B cell (primary cell): ENCODE measurements at regions of chr17 and their contacts with region 1.

Region 1: DNA sequence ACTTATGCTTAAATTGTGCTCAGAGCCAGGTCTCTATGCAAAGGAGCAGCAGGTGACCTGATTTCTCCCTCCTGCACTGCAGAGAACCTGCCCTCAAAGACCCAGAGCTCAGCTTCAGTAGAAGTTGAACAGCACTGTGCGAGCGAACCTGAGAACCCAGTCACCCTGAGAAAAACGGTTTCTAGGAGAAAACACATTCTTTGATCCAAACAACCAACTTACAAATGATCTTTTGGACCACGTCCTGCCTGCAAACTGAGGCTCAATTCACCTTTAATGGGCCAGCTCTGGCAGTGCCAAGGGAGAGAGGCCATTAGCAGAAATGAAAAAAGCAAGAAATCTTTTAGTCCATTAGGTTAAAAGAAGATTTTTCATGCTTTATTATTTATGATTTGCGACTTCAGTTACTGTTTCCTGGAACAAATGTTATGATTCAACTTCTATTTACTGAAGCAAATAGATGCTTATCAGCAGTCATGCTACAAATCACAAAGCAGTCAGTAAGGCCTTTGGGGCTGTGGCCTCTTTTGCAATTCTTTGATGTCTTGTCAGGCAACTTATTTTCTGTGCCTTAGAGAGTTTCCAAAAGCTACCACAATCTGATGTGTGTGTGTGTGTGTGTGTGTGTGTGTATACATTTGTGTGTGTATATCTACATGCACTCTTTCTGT is 65.7 kb upstream of the LRRC37A3 start:
- DNase-seq: peak; percentile 44
- ATAC-seq: no peak
- H3K4me3 ChIP-seq: peak overlapping the region in 1 of 5 experiments; percentile 50
- H3K4me3 Mint-ChIP-seq: peak overlapping the region; percentile 81
- H3K27ac ChIP-seq: peak overlapping the region; percentile 99 to 100
- H3K27ac Mint-ChIP-seq: peak overlapping the region; percentile 99
- H3K4me1 ChIP-seq: peaks cover 33 to 49% of the 10 kb centered on the region in 2 donors
- H3K4me1 Mint-ChIP-seq: peaks cover 51% of the 10 kb centered on the region
- H3K27me3 ChIP-seq: no peaks in the 10 kb centered on the region
- H3K27me3 Mint-ChIP-seq: no peaks in the 10 kb centered on the region
- CTCF ChIP-seq: no peak

Region 2: GRCh38 chr17:64968652-64969501 is 16.1 kb before region 1 on chr17:
- CTCF ChIA-PET with region 1: interaction called, 13 read pairs
- POLR2A ChIA-PET with region 1: interaction called, 5 read pairs
- intact Hi-C with region 1: no loop called
- DNase-seq: peak; percentile 37
- ATAC-seq: no peak
- H3K4me3 ChIP-seq: no peak overlapping the region
- H3K4me3 Mint-ChIP-seq: peak overlapping the region; percentile 65
- H3K27ac ChIP-seq: peak overlapping the region; percentile 2 to 73
- H3K27ac Mint-ChIP-seq: peak overlapping the region; percentile 81
- H3K4me1 ChIP-seq: peaks cover 59 to 66% of the 10 kb centered on the region in 2 donors
- H3K4me1 Mint-ChIP-seq: peaks cover 80% of the 10 kb centered on the region
- H3K27me3 ChIP-seq: no peaks in the 10 kb centered on the region
- H3K27me3 Mint-ChIP-seq: no peaks in the 10 kb centered on the region
- CTCF ChIP-seq: no peak

Region 3: DNA sequence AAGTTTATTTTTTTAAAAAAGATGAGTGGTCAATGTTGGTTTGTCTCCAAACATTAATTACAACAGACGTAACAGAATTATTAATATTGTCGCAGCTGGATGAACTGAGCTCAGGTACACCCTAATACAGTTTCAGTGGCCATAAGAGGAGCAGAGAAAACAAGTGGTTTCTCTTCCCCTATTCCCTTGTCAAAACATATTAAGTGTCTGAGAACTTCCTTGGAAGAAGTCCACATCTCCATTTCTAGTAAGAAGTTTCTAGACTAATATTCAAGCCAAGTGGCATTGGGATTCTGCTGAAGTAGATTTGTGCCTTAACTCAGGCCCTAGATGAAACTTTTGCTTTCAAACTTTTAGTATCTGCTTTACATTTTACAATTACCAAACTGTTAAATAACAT is 23.9 kb after region 1 on chr17:
- CTCF ChIA-PET with region 1: interaction called, 10 read pairs
- POLR2A ChIA-PET with region 1: no interaction called
- intact Hi-C with region 1: loop called (anchors 2 kb)
- DNase-seq: no peak
- ATAC-seq: peak; percentile 21
- H3K4me3 ChIP-seq: no peak overlapping the region
- H3K4me3 Mint-ChIP-seq: no peak overlapping the region
- H3K27ac ChIP-seq: peak overlapping the region in 1 of 2 donors; percentile 36
- H3K27ac Mint-ChIP-seq: peak overlapping the region; percentile 52
- H3K4me1 ChIP-seq: peaks cover 32 to 42% of the 10 kb centered on the region in 2 donors
- H3K4me1 Mint-ChIP-seq: peaks cover 75% of the 10 kb centered on the region
- H3K27me3 ChIP-seq: no peaks in the 10 kb centered on the region
- H3K27me3 Mint-ChIP-seq: no peaks in the 10 kb centered on the region
- CTCF ChIP-seq: no peak

Region 4: DNA sequence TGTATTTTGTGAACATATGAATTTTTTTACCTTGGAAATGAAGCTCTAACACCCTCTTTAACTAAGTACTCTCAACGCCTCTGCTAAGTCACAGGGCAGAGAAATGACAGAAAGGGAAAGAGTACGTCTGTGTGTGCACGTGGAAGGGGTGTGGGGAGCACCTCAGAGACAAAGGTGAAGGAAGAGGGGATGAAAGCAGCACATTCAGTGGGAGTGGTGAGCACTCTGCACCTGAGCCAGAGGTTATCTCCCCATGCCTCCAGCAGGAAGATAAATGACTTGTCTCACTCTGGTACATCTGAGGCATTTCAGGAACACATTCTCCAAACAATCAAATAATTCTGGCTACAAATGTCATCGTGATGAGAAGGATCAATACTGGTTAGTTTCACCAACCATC is 56.5 kb after region 1 on chr17:
- CTCF ChIA-PET with region 1: no interaction called
- POLR2A ChIA-PET with region 1: no interaction called
- intact Hi-C with region 1: no loop called
- DNase-seq: no peak
- ATAC-seq: no peak
- H3K4me3 ChIP-seq: no peak overlapping the region
- H3K4me3 Mint-ChIP-seq: peak overlapping the region; percentile 68
- H3K27ac ChIP-seq: peak overlapping the region in 1 of 2 donors; percentile 52
- H3K27ac Mint-ChIP-seq: peak overlapping the region; percentile 69
- H3K4me1 ChIP-seq: peaks cover 70 to 76% of the 10 kb centered on the region in 2 donors
- H3K4me1 Mint-ChIP-seq: peaks cover 74% of the 10 kb centered on the region
- H3K27me3 ChIP-seq: no peaks in the 10 kb centered on the region
- H3K27me3 Mint-ChIP-seq: no peaks in the 10 kb centered on the region
- CTCF ChIP-seq: no peak

Region 5: GRCh38 chr17:65131946-65132366 is 147.0 kb after region 1 on chr17:
- CTCF ChIA-PET with region 1: no interaction called
- POLR2A ChIA-PET with region 1: no interaction called
- intact Hi-C with region 1: no loop called
- DNase-seq: no peak
- ATAC-seq: no peak
- H3K4me3 ChIP-seq: no peak overlapping the region
- H3K4me3 Mint-ChIP-seq: no peak overlapping the region
- H3K27ac ChIP-seq: no peak overlapping the region
- H3K27ac Mint-ChIP-seq: no peak overlapping the region
- H3K4me1 ChIP-seq: peaks cover 3 to 4% of the 10 kb centered on the region in 2 donors
- H3K4me1 Mint-ChIP-seq: peaks cover 7% of the 10 kb centered on the region
- H3K27me3 ChIP-seq: peaks cover 0 to 7% (median 2%) of the 10 kb centered on the region in 4 experiments
- H3K27me3 Mint-ChIP-seq: peaks cover 18% of the 10 kb centered on the region
- CTCF ChIP-seq: no peak